H1 (cell line): ENCODE measurements at regions of chr2 and their contacts with region 1.

Region 1: GRCh38 chr2:46364797-46365457 is 67.7 kb downstream of the EPAS1 start:
- DNase-seq: no peak
- H3K4me3 ChIP-seq: no peak overlapping the region
- H3K27ac ChIP-seq: no peak overlapping the region
- H3K4me1 ChIP-seq: no peaks in the 10 kb centered on the region
- H3K27me3 ChIP-seq: no peaks in the 10 kb centered on the region
- CTCF ChIP-seq: peak in 2 of 3 experiments; percentile 67 to 77; a peak in 3 of 4 replicates
- EP300 ChIP-seq: no peak
- POLR2A ChIP-seq: no peak
- RAD21 ChIP-seq: peak; percentile 72 to 77

Region 2: GRCh38 chr2:45993476-45993991 is 371.4 kb before region 1 on chr2:
- CTCF ChIA-PET with region 1: interaction called, 25 read pairs
- POLR2A ChIA-PET with region 1: interaction called, 6 read pairs
- DNase-seq: peak; percentile 43 to 73
- H3K4me3 ChIP-seq: no peak overlapping the region
- H3K27ac ChIP-seq: no peak overlapping the region
- H3K4me1 ChIP-seq: no peaks in the 10 kb centered on the region; a peak in 1 of 7 replicates
- H3K27me3 ChIP-seq: no peaks in the 10 kb centered on the region
- CTCF ChIP-seq: peak; percentile 45 to 84 (median 78)
- EP300 ChIP-seq: no peak
- POLR2A ChIP-seq: no peak
- RAD21 ChIP-seq: peak; percentile 90 to 91

Region 3: DNA sequence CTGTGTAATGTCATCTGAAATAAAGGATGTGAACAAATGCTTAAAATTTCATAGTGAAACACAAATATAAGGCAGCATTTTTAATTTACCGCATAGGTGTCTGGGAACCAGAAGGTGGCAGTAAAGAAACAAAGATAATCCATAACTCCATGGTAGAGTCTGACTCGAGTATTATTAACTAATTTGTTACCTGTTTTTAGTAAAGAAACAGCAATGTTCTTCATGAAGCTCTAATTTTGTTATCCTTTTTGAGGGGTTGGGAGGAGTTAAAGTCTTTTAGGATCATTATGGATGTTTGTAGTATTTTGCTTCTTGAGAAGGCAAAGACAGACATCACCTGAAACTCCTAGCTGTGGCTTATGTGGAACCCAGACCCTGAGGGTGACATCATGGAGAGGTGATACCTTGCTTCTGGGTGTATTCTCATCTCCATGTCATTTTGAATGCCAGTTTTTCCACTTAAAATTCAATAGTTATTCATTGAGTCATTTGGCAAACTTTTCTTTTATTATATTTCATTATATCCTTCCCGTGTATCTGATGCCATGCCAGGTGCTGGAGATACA is 353.9 kb before region 1 on chr2:
- CTCF ChIA-PET with region 1: interaction called, 12 read pairs
- POLR2A ChIA-PET with region 1: no interaction called
- DNase-seq: peak in 1 of 2 experiments; percentile 14
- H3K4me3 ChIP-seq: no peak overlapping the region
- H3K27ac ChIP-seq: no peak overlapping the region
- H3K4me1 ChIP-seq: peaks cover 3 to 9% (median 5%) of the 10 kb centered on the region in 4 experiments; a peak in 6 of 7 replicates
- H3K27me3 ChIP-seq: no peaks in the 10 kb centered on the region
- CTCF ChIP-seq: peak in 2 of 3 experiments; percentile 38 to 53; a peak in 2 of 4 replicates
- EP300 ChIP-seq: no peak
- POLR2A ChIP-seq: no peak
- RAD21 ChIP-seq: peak; percentile 66 to 71

Region 4: GRCh38 chr2:46327632-46328031 is 37.3 kb before region 1 on chr2:
- CTCF ChIA-PET with region 1: interaction called, 12 read pairs
- POLR2A ChIA-PET with region 1: interaction called, 3 read pairs
- DNase-seq: no peak
- H3K4me3 ChIP-seq: no peak overlapping the region
- H3K27ac ChIP-seq: no peak overlapping the region
- H3K4me1 ChIP-seq: peaks cover 0 to 7% (median 2%) of the 10 kb centered on the region in 4 experiments; a peak in 4 of 7 replicates
- H3K27me3 ChIP-seq: no peaks in the 10 kb centered on the region; a peak in 2 of 7 replicates
- CTCF ChIP-seq: peak; percentile 47 to 61 (median 54)
- EP300 ChIP-seq: no peak
- POLR2A ChIP-seq: no peak
- RAD21 ChIP-seq: peak in 1 of 2 experiments; percentile 34; a peak in 1 of 4 replicates

Region 5: DNA sequence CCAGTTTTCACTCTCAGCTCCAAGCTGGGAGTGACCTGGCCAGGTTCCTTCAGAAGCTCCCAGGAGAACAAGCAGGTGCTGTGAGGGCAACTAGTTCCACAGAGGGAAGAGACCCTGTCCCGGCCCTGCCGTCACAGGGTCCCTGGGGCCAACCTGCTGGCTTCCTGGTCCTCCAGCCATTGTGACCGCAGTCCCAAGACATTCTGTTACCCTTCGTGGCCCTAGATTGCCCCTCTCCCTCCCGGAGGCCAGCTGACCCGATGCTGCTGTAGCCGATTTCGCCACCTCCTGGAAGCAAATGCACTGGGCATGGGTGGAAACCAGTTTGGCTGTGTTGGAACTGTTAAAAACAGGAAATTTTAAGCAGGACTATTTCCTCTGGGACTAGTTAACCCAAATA is 12.3 kb before region 1 on chr2:
- CTCF ChIA-PET with region 1: interaction called, 52 read pairs
- POLR2A ChIA-PET with region 1: no interaction called
- DNase-seq: no peak
- H3K4me3 ChIP-seq: no peak overlapping the region
- H3K27ac ChIP-seq: no peak overlapping the region
- H3K4me1 ChIP-seq: peaks cover 0 to 5% (median 0%) of the 10 kb centered on the region in 4 experiments; a peak in 1 of 7 replicates
- H3K27me3 ChIP-seq: no peaks in the 10 kb centered on the region
- CTCF ChIP-seq: no peak
- EP300 ChIP-seq: no peak
- POLR2A ChIP-seq: no peak
- RAD21 ChIP-seq: peak; percentile 25 to 48; a peak in 3 of 4 replicates

Region 6: GRCh38 chr2:46377176-46377581 is 12.3 kb after region 1 on chr2:
- CTCF ChIA-PET with region 1: interaction called, 43 read pairs
- POLR2A ChIA-PET with region 1: no interaction called
- DNase-seq: no peak
- H3K4me3 ChIP-seq: no peak overlapping the region
- H3K27ac ChIP-seq: no peak overlapping the region
- H3K4me1 ChIP-seq: no peaks in the 10 kb centered on the region
- H3K27me3 ChIP-seq: no peaks in the 10 kb centered on the region
- CTCF ChIP-seq: peak in 2 of 3 experiments; percentile 5 to 7; a peak in 2 of 4 replicates
- EP300 ChIP-seq: no peak
- POLR2A ChIP-seq: no peak
- RAD21 ChIP-seq: peak; percentile 16 to 36; a peak in 2 of 4 replicates

Region 7: GRCh38 chr2:46385786-46386577 is 21.1 kb after region 1 on chr2:
- CTCF ChIA-PET with region 1: interaction called, 10 read pairs
- POLR2A ChIA-PET with region 1: no interaction called
- DNase-seq: no peak
- H3K4me3 ChIP-seq: no peak overlapping the region
- H3K27ac ChIP-seq: no peak overlapping the region
- H3K4me1 ChIP-seq: no peaks in the 10 kb centered on the region
- H3K27me3 ChIP-seq: no peaks in the 10 kb centered on the region; a peak in 1 of 7 replicates
- CTCF ChIP-seq: no peak
- EP300 ChIP-seq: no peak
- POLR2A ChIP-seq: no peak
- RAD21 ChIP-seq: no peak

Region 8: GRCh38 chr2:46470114-46470628 is 105.2 kb after region 1 on chr2:
- CTCF ChIA-PET with region 1: no interaction called
- POLR2A ChIA-PET with region 1: no interaction called
- DNase-seq: no peak
- H3K4me3 ChIP-seq: no peak overlapping the region
- H3K27ac ChIP-seq: no peak overlapping the region
- H3K4me1 ChIP-seq: no peaks in the 10 kb centered on the region
- H3K27me3 ChIP-seq: no peaks in the 10 kb centered on the region
- CTCF ChIP-seq: no peak
- EP300 ChIP-seq: no peak
- POLR2A ChIP-seq: no peak
- RAD21 ChIP-seq: no peak